HCT116 (cell line): ENCODE measurements at regions of chr20 and their contacts with region 1.

Region 1: DNA sequence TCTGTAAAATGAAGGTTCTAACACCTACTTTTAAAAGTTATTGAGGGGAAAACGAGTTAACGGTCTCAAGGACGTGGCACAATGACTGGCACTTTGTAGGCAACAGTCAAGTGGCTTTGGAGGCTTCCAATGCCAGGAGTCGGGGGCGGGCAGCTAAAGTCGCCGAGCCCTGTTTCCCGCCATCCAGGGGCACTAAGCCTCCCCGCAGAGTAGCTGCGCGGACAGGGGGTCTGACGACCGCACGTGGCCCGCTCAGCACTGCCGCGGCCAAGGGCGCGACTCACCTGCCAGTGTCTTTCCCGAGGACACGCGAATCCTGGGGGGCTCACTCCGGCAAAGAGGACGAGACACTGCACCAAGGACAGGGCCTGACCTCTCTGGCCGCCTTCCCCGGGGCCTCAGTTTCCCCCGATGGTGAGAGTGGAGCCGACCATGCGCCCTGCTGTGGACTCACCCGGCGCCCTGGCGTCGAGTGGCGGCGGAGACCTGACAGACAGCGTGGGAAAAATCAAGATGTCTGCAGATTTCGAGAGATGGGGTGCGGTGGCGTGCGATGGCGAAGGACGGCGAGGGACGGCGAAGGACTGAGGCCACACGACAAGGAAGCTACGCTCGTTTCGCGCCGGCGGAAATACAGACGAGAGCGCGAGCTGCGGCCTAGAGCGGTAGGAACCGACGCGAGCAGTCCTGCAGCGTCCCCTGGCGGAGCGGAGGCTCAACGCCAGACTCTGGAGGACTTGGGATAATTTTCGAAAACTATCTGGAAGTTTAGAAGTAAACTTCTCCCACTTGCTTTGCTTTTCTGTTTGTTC is at the start of gene SNHG17:
- DNase-seq: peak; percentile 87
- ATAC-seq: peak; percentile 84
- H3K4me3 ChIP-seq: peak within 1 kb of the TSS; percentile 77 to 99
- H3K27ac ChIP-seq: peak within 1 kb of the TSS; percentile 85
- H3K4me1 ChIP-seq: peaks cover 5 to 17% of the 10 kb centered on the region in 2 experiments
- H3K27me3 ChIP-seq: 0 out of 2 replicates have a peak, but pooled peaks cover 3% of the 10 kb centered on the region
- CTCF ChIP-seq: peak; percentile 90 to 100 (median 99)
- POLR2A ChIP-seq: peak; percentile 91
- RAD21 ChIP-seq: peak; percentile 50
- total RNA-seq, gene SNHG17: 65.7 TPM

Region 2: DNA sequence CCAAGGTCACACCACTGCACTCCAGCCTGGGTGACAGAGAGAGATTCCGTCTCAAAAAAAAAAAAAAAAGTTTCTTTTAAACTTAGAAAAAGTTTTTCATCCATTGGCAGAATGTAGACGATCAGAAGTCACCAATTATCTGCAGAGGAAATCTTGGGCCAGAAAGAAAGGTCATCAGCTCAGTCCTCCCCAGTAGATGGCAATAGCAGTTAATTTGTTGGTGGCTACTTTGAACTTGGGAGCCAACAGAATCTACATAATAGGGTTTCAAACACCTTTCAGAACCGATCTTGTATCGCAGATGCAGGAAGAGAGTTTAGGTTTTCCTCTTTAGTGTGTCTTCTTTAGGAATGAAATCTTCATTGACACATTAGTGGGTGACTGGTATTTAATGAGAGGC is 47.0 kb before region 1 on chr20:
- CTCF ChIA-PET with region 1: no interaction called
- POLR2A ChIA-PET with region 1: no interaction called
- RAD21 ChIA-PET with region 1: no interaction called
- intact Hi-C with region 1: no loop called
- DNase-seq: no peak
- ATAC-seq: no peak
- H3K4me3 ChIP-seq: no peak overlapping the region
- H3K27ac ChIP-seq: no peak overlapping the region
- H3K4me1 ChIP-seq: no peaks in the 10 kb centered on the region
- H3K27me3 ChIP-seq: no peaks in the 10 kb centered on the region
- CTCF ChIP-seq: 0 out of 6 replicates have a peak, but pooled peaks of 2 of the 3 experiments have one; percentile 4 to 8
- POLR2A ChIP-seq: no peak
- RAD21 ChIP-seq: peak; percentile 35; the same call in 1 of the 2 replicates

Region 3: GRCh38 chr20:38446441-38447209 is 11.7 kb after region 1 on chr20:
- CTCF ChIA-PET with region 1: interaction called, 15 read pairs
- POLR2A ChIA-PET with region 1: interaction called, 27 read pairs
- RAD21 ChIA-PET with region 1: no interaction called
- intact Hi-C with region 1: loop called (anchors 1 kb)
- DNase-seq: peak; percentile 89
- ATAC-seq: peak; percentile 93
- H3K4me3 ChIP-seq: peak overlapping the region; percentile 97 to 99
- H3K27ac ChIP-seq: peak overlapping the region; percentile 72
- H3K4me1 ChIP-seq: peaks cover 5 to 36% of the 10 kb centered on the region in 2 experiments; a peak in 3 of 4 replicates
- H3K27me3 ChIP-seq: no peaks in the 10 kb centered on the region
- CTCF ChIP-seq: peak; percentile 83 to 93 (median 93)
- POLR2A ChIP-seq: peak; percentile 85
- RAD21 ChIP-seq: peak; percentile 55

Region 4: DNA sequence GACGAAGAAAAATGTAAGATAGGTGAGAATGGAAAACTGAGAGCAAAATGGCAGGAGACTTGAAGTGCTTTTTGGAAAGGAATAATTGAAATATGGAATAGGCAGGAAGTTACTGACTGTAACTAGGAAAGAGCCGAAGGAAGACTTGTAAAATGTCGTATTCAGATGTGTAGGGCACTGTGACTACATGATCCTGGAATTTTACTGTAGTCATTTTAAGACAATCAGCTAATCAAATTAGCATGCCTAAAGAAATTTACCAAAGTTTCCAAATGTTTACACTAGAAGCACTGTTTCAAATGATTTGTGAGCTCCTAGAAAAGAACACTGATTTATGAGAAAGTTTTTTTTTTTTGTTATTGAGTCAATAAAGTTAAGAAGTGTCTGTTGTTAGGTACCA is 124.8 kb after region 1 on chr20:
- CTCF ChIA-PET with region 1: no interaction called
- POLR2A ChIA-PET with region 1: no interaction called
- RAD21 ChIA-PET with region 1: no interaction called
- intact Hi-C with region 1: no loop called
- DNase-seq: no peak
- ATAC-seq: no peak
- H3K4me3 ChIP-seq: no peak overlapping the region
- H3K27ac ChIP-seq: no peak overlapping the region
- H3K4me1 ChIP-seq: no peaks in the 10 kb centered on the region
- H3K27me3 ChIP-seq: no peaks in the 10 kb centered on the region
- CTCF ChIP-seq: no peak
- POLR2A ChIP-seq: no peak
- RAD21 ChIP-seq: no peak